ENCODE measurements at regions of chr7 and their contacts with region 1.

Region 1: GRCh38 chr7:7114706-7115295 is 67.5 kb upstream of the C1GALT1 start:
- H3K4me3 ChIP-seq: no peak overlapping the region
- H3K27ac ChIP-seq: no peak overlapping the region
- H3K4me1 ChIP-seq: peaks cover 4% of the 10 kb centered on the region; the same call in 1 of the 2 replicates
- CTCF ChIP-seq: no peak

Region 2: GRCh38 chr7:7103343-7104313 is 11.2 kb before region 1 on chr7:
- CTCF ChIA-PET with region 1: interaction called, 24 read pairs
- POLR2A ChIA-PET with region 1: no interaction called
- H3K4me3 ChIP-seq: no peak overlapping the region
- H3K27ac ChIP-seq: no peak overlapping the region
- H3K4me1 ChIP-seq: peaks cover 2% of the 10 kb centered on the region
- CTCF ChIP-seq: no peak

Region 3: GRCh38 chr7:7125963-7126362 is 11.2 kb after region 1 on chr7:
- CTCF ChIA-PET with region 1: no interaction called
- POLR2A ChIA-PET with region 1: no interaction called
- H3K4me3 ChIP-seq: no peak overlapping the region
- H3K27ac ChIP-seq: no peak overlapping the region
- H3K4me1 ChIP-seq: no peaks in the 10 kb centered on the region
- CTCF ChIP-seq: no peak

Region 4: GRCh38 chr7:7136423-7136822 is 21.6 kb after region 1 on chr7:
- CTCF ChIA-PET with region 1: no interaction called
- POLR2A ChIA-PET with region 1: no interaction called
- H3K4me3 ChIP-seq: no peak overlapping the region
- H3K27ac ChIP-seq: 0 out of 2 replicates have a peak overlapping the region, but pooled peaks have one; percentile 1
- H3K4me1 ChIP-seq: peaks cover 3% of the 10 kb centered on the region; the same call in 1 of the 2 replicates
- CTCF ChIP-seq: no peak